Activated naive CD4-positive, alpha-beta T cell treated with anti-CD3 and anti-CD28 coated beads for 36 hours (primary cell): ENCODE measurements at regions of chr19 and their contacts with region 1.

Region 1: DNA sequence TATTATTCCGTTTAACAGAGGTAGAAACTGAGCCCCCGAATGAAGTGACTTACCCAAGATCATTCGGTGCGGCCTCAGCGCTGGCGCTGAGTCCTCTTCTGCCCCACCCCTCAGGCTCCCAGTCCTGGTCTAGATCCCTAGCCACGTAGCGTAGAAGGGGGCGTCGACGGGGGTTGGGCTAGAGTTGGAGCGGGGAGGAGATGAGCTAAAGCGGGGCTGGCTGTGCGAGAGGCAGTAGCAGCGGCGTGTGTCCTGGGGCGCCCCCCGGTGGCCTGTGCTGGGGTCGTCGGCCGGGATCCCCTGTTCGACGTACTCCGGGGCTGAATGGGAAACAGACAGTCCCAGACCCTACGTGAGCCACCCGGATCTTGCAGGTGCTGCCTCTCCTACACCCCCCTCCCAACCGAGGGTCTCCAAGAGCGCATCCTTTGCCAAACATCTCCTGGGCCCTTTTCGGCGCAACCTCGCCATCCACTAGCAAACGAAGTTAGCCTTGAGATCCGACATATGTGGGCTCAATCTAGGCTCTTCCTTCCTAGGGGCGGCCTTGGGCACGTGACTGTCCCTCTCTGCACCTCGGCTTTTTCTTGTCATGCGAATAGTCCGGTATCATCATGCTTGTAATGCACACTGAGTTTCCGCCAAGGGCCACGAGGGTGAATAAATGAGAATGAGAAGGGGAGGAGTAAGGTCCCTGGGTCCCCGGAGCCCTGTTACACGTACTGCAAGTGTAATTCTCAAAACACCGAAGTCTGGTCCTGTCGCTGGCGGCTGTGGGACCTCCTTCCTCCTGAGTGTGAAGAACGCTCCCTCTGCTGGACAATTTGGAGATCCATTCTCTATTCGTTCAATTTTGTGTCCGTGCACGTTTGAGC is 47.7 kb downstream of the CYP4F22 start:
- DNase-seq: peak; percentile 98
- H3K4me3 Mint-ChIP-seq: peak overlapping the region; percentile 76
- H3K27ac Mint-ChIP-seq: peak overlapping the region; percentile 50
- H3K4me1 Mint-ChIP-seq: peaks cover 14% of the 10 kb centered on the region
- H3K27me3 Mint-ChIP-seq: no peaks in the 10 kb centered on the region

Region 2: GRCh38 chr19:15091901-15092753 is 463.9 kb before region 1 on chr19:
- CTCF ChIA-PET with region 1: interaction called, 4 read pairs
- intact Hi-C with region 1: loop called (anchors 1 kb)
- DNase-seq: peak; percentile 61
- H3K4me3 Mint-ChIP-seq: no peak overlapping the region
- H3K27ac Mint-ChIP-seq: no peak overlapping the region
- H3K4me1 Mint-ChIP-seq: peaks cover 2% of the 10 kb centered on the region
- H3K27me3 Mint-ChIP-seq: peaks cover 8% of the 10 kb centered on the region

Region 3: GRCh38 chr19:15177269-15178116 is 378.5 kb before region 1 on chr19:
- CTCF ChIA-PET with region 1: interaction called, 5 read pairs
- intact Hi-C with region 1: loop called (anchors 1 kb)
- DNase-seq: peak; percentile 84
- H3K4me3 Mint-ChIP-seq: peak overlapping the region; percentile 24
- H3K27ac Mint-ChIP-seq: no peak overlapping the region
- H3K4me1 Mint-ChIP-seq: peaks cover 2% of the 10 kb centered on the region
- H3K27me3 Mint-ChIP-seq: peaks cover 3% of the 10 kb centered on the region

Region 4: GRCh38 chr19:15332311-15332996 is 223.5 kb before region 1 on chr19 and contains the start of gene BRD4:
- CTCF ChIA-PET with region 1: no interaction called
- intact Hi-C with region 1: loop called (anchors 5 kb)
- DNase-seq: peak; percentile 73
- H3K4me3 Mint-ChIP-seq: peak within 1 kb of the TSS; percentile 94
- H3K27ac Mint-ChIP-seq: peak within 1 kb of the TSS; percentile 93
- H3K4me1 Mint-ChIP-seq: peaks cover 45% of the 10 kb centered on the region
- H3K27me3 Mint-ChIP-seq: no peaks in the 10 kb centered on the region
- total RNA-seq, gene BRD4: 109 to 111 TPM

Region 5: GRCh38 chr19:15418588-15419412 is 137.2 kb before region 1 on chr19 and contains the start of gene AKAP8L:
- CTCF ChIA-PET with region 1: interaction called, 79 read pairs
- intact Hi-C with region 1: loop called (anchors 1 kb)
- DNase-seq: peak; percentile 99
- H3K4me3 Mint-ChIP-seq: peak within 1 kb of the TSS; percentile 99
- H3K27ac Mint-ChIP-seq: peak within 1 kb of the TSS; percentile 92
- H3K4me1 Mint-ChIP-seq: peaks cover 38% of the 10 kb centered on the region
- H3K27me3 Mint-ChIP-seq: no peaks in the 10 kb centered on the region
- total RNA-seq, gene AKAP8L: 127 to 140 TPM

Region 6: DNA sequence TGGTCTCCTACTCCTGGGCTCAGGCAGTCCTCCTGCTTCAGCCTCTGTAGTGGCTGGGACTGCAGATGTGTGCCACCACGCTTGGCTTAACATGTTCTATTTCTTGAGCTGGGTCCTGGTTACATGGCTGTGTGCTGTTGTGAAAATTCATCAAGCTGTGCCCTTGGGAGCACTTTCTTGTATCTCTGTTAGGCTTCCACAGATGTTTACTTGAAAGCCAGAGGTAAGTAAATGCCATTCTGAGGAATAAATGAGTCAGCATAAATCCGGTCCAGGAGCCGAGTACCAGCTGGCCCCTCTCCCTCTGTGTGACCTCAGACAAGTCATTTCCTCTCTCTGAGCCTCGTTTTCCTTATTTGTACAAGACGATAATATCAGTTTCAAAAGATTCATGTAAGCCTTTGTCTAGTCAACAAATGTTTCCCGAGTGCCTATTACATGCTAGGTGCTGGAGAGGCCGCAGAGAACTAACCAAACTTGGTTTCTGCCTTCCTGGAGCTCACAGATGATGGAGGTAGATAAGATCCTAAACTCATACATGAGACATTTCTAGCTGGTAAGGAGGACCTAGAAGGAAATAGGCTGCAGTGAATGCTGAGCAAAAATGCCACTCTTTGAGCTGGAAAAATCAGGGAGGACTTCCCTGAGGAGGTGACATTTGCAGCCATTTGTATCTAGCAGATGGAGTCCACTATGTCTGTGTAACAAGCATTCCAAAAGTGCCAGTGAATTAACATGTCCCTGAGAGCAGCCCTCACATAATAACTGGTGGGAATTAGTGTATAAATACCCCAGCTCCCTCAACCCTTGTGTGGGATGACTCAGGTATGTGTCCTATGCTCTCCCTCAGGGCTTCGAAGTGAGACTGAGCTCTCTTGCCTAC is 88.9 kb before region 1 on chr19:
- CTCF ChIA-PET with region 1: interaction called, 7 read pairs
- intact Hi-C with region 1: loop called (anchors 1 kb)
- DNase-seq: peak; percentile 85
- H3K4me3 Mint-ChIP-seq: peak overlapping the region; percentile 34
- H3K27ac Mint-ChIP-seq: peak overlapping the region; percentile 93
- H3K4me1 Mint-ChIP-seq: peaks cover 56% of the 10 kb centered on the region
- H3K27me3 Mint-ChIP-seq: peaks cover 3% of the 10 kb centered on the region

Region 7: GRCh38 chr19:15532779-15533521 is 23.0 kb before region 1 on chr19:
- CTCF ChIA-PET with region 1: interaction called, 5 read pairs
- intact Hi-C with region 1: loop called (anchors 2 kb)
- DNase-seq: peak; percentile 61
- H3K4me3 Mint-ChIP-seq: no peak overlapping the region
- H3K27ac Mint-ChIP-seq: peak overlapping the region; percentile 54
- H3K4me1 Mint-ChIP-seq: peaks cover 34% of the 10 kb centered on the region
- H3K27me3 Mint-ChIP-seq: no peaks in the 10 kb centered on the region